Right cardiac atrium (tissue), 5 donors: ENCODE measurements at regions of chr6 and their contacts with region 1.

Region 1: GRCh38 chr6:53064726-53065215 is 433 bp upstream of the FBXO9 start:
- DNase-seq: peak; percentile 97 to 99 (median 98)
- ATAC-seq: peak; percentile 93 to 94
- H3K4me3 ChIP-seq: peak overlapping the region; percentile 87
- H3K27ac ChIP-seq: peak overlapping the region; percentile 92
- H3K4me1 ChIP-seq: peaks cover 2% of the 10 kb centered on the region
- H3K27me3 ChIP-seq: no peaks in the 10 kb centered on the region

Region 2: DNA sequence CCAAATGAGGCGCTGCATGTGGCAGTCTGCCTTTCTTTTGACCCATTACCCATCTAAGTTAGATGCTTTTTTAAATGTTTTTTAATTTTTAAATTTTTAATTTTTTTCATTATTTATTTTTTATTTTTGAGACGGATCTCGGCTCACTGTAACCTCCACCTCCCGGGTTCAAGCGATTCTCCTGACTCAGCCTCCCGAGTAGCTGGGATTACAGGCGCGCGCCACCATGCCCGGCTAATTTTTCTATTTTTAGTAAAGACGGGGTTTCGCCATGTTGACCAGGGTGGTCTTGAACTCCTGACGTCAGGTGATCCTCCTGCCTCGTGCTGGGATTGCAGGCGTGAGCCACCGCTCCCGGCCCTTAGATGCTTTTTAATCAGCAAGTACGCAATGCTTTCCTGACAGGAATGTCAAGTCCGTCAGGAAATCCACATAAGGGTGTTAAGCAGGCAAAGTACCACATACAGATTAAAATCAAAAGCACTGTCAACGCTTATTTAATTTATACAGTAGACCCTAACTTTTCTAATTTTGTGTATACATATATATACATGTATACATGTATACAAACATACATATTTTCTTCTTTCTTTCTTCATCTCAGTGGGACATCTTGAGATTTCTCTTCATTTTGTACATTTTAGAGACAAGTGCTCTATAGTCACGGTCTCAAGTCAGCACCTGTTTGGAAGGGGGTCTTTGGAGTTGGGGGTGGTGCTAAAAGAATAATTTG is 68.7 kb before region 1 on chr6:
- intact Hi-C with region 1: loop called in 2 of 4 experiments (anchors 2 to 10 kb)
- DNase-seq: peak; percentile 49 to 78 (median 58)
- ATAC-seq: peak in 1 of 2 donors; percentile 18
- H3K4me3 ChIP-seq: peak overlapping the region; percentile 39
- H3K27ac ChIP-seq: peak overlapping the region; percentile 65
- H3K4me1 ChIP-seq: no peaks in the 10 kb centered on the region
- H3K27me3 ChIP-seq: no peaks in the 10 kb centered on the region

Region 3: GRCh38 chr6:53005663-53006250 is 59.0 kb before region 1 on chr6:
- intact Hi-C with region 1: loop called in 1 of 4 experiments (anchors 10 kb)
- DNase-seq: no peak
- ATAC-seq: no peak
- H3K4me3 ChIP-seq: no peak overlapping the region
- H3K27ac ChIP-seq: no peak overlapping the region
- H3K4me1 ChIP-seq: no peaks in the 10 kb centered on the region
- H3K27me3 ChIP-seq: no peaks in the 10 kb centered on the region

Region 4: GRCh38 chr6:53151676-53152075 is 86.9 kb after region 1 on chr6:
- intact Hi-C with region 1: no loop called
- DNase-seq: no peak
- ATAC-seq: no peak
- H3K4me3 ChIP-seq: no peak overlapping the region
- H3K27ac ChIP-seq: no peak overlapping the region
- H3K4me1 ChIP-seq: no peaks in the 10 kb centered on the region
- H3K27me3 ChIP-seq: no peaks in the 10 kb centered on the region

Region 5: DNA sequence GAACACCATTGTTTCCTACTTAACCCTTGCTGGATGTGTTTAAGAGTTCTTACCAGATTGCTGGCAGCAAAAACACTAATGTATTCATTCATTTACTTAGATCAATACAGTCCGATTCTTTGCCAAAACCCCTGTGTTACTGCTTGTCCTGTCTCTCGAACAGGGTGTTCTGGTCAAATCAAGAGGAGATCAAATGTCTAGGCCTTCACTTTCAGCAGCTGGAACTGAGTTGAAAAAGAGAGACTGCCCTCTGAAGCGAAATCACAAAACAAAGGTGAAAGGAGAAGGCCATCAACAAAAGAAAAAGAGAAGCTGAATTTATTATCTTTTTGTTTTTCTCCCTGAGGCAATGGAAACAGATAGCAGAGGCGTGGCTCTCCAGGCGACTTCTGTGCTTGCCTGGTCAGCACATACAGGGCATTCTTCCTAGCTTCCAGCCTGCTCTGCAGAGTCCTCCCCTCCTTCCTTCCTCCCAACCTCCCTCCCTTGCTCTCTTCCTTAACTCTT is 128.0 kb after region 1 on chr6:
- intact Hi-C with region 1: no loop called
- DNase-seq: peak in 1 of 3 donors; percentile 59
- ATAC-seq: peak; percentile 74 to 86
- H3K4me3 ChIP-seq: no peak overlapping the region
- H3K27ac ChIP-seq: peak overlapping the region; percentile 13
- H3K4me1 ChIP-seq: no peaks in the 10 kb centered on the region
- H3K27me3 ChIP-seq: no peaks in the 10 kb centered on the region

Region 6: GRCh38 chr6:53359072-53359842 is 294.5 kb after region 1 on chr6:
- intact Hi-C with region 1: no loop called
- DNase-seq: peak; percentile 97 to 99 (median 99)
- ATAC-seq: peak; percentile 98 to 99
- H3K4me3 ChIP-seq: peak overlapping the region; percentile 55
- H3K27ac ChIP-seq: peak overlapping the region; percentile 92
- H3K4me1 ChIP-seq: no peaks in the 10 kb centered on the region
- H3K27me3 ChIP-seq: no peaks in the 10 kb centered on the region